ENCODE measurements at regions of chr12 and their contacts with region 1.

Region 1: DNA sequence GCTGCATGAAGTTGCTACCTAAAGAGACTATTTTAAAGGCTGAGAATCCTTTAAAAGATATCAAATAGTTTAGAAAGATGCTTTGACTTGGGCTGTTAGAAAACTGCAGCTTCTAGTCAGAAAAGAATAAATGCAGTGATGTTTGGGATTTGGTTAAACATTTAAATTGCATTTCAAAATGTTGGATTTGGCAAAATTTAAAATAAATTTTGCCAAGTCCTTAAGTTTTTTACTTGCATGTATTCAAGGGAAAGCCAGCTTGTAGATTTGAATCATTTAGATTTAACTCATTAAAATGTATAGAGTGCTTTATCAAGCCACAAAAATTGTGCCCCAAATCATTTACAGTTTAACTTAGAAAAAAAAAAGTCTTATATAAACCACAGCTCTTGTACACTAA is 109.7 kb downstream of the ANKS1B start:
- DNase-seq: no peak
- ATAC-seq: no peak
- H3K4me3 ChIP-seq: no peak overlapping the region
- H3K27ac ChIP-seq: no peak overlapping the region
- H3K4me1 ChIP-seq: no peaks in the 10 kb centered on the region
- H3K27me3 ChIP-seq: no peaks in the 10 kb centered on the region
- CTCF ChIP-seq: no peak
- EP300 ChIP-seq: no peak
- POLR2A ChIP-seq: no peak
- RAD21 ChIP-seq: no peak

Region 2: DNA sequence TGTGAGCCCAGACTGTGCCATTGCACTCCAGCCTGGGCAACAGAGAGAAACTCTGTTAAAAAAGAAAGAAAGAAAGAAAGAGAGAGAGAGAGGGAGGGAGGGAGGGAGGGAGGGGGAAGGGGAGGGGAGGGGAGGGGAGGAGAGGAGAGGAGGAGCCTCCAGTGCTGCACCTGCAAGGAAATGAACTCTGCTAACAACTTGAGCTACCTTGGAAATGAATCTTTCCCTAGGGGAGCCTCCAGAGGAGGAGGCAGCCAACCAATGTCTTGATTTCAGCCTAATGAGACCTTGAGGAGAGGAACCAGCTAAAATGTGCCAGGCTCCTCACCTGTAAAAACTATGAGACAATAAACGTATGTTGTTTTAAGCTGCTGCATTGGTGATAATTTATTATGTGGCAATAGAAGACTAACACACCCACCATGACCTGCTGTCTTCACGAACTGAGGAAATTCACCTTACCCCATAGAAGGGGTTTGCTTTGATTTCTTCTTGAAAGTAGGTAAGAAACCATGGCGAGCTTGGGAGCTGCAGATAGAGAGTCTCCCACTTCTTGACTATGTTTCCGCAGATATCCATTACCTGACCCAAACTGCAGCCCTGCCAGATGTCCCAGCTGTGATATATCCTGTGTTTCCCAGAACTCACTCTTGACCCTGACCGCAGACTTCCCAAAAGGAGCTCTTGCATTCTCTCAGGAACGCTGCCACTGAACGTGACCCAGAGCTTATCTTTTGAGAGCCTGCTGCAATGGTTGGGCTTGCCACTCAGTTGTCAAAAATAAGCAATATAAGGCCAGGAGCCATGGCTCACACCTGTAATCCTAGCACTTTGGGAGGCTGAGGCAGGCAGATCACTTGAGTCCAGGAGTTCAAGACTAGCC is 1391.2 kb before region 1 on chr12:
- CTCF ChIA-PET with region 1: no interaction called
- POLR2A ChIA-PET with region 1: no interaction called
- in situ Hi-C with region 1: no loop called
- intact Hi-C with region 1: loop called (anchors 5 kb)
- DNase-seq: no peak
- ATAC-seq: no peak
- H3K4me3 ChIP-seq: no peak overlapping the region
- H3K27ac ChIP-seq: no peak overlapping the region
- H3K4me1 ChIP-seq: peaks cover 27% of the 10 kb centered on the region
- H3K27me3 ChIP-seq: no peaks in the 10 kb centered on the region
- CTCF ChIP-seq: no peak
- EP300 ChIP-seq: no peak
- POLR2A ChIP-seq: no peak
- RAD21 ChIP-seq: no peak